Prostate gland (tissue), 2 donors: ENCODE measurements at regions of chr3 and their contacts with region 1.

Region 1: DNA sequence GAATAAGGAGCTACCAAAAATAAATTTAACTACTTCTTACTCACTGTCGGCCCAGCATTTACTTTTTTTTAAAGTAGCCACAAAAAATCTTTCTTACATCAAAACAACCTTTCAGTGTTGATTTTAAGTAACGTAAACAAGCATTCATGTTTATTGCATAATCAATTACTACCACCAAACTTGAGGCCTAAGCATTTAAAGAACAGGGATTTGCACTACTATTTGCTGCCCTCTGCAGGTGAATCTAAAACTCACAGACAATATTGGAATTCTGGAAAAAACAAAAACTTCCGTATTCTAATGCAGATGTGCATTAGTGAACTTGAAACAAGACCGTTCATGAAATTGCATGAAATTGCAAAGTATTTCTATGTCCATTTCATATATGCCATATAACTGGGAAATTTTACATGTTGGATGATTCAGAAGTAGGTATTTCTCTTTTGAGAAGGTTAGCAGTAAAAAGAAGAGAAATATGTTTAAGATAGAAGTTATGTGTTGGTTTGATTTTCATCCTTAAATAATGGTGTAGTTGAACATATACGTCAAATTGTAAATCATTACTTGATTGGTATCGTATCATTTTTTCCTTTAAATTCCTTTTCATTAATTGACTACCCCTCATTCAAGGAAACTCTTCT is 55.6 kb downstream of the CGGBP1 start:
- DNase-seq: no peak
- H3K4me3 ChIP-seq: no peak overlapping the region
- H3K27ac ChIP-seq: no peak overlapping the region
- H3K4me1 ChIP-seq: no peaks in the 10 kb centered on the region
- H3K27me3 ChIP-seq: no peaks in the 10 kb centered on the region
- CTCF ChIP-seq: peak; percentile 39 to 85 (median 67)
- POLR2A ChIP-seq: no peak

Region 2: GRCh38 chr3:87350364-87351199 is 652.7 kb before region 1 on chr3:
- intact Hi-C with region 1: loop called (anchors 5 kb)
- DNase-seq: peak; percentile 24
- H3K4me3 ChIP-seq: no peak overlapping the region
- H3K27ac ChIP-seq: no peak overlapping the region
- H3K4me1 ChIP-seq: no peaks in the 10 kb centered on the region
- H3K27me3 ChIP-seq: no peaks in the 10 kb centered on the region
- CTCF ChIP-seq: peak; percentile 67 to 90 (median 79)
- POLR2A ChIP-seq: no peak

Region 3: GRCh38 chr3:88113311-88114162 is 110.3 kb after region 1 on chr3:
- intact Hi-C with region 1: loop called (anchors 5 kb)
- DNase-seq: peak; percentile 62
- H3K4me3 ChIP-seq: no peak overlapping the region
- H3K27ac ChIP-seq: no peak overlapping the region
- H3K4me1 ChIP-seq: no peaks in the 10 kb centered on the region
- H3K27me3 ChIP-seq: no peaks in the 10 kb centered on the region
- CTCF ChIP-seq: peak; percentile 26 to 63 (median 56)
- POLR2A ChIP-seq: no peak